Calu3 (cell line): ENCODE measurements at regions of chr10 and their contacts with region 1.

Region 1: GRCh38 chr10:72273410-72274212 is at the start of gene DDIT4:
- DNase-seq: peak; percentile 100
- H3K4me3 Mint-ChIP-seq: peak within 1 kb of the TSS; percentile 95
- H3K27ac Mint-ChIP-seq: peak within 1 kb of the TSS; percentile 99
- H3K4me1 Mint-ChIP-seq: peaks cover 62% of the 10 kb centered on the region
- H3K27me3 Mint-ChIP-seq: no peaks in the 10 kb centered on the region
- CTCF ChIP-seq: no peak
- total RNA-seq, gene DDIT4: 294 and 326 TPM in 2 replicates

Region 2: DNA sequence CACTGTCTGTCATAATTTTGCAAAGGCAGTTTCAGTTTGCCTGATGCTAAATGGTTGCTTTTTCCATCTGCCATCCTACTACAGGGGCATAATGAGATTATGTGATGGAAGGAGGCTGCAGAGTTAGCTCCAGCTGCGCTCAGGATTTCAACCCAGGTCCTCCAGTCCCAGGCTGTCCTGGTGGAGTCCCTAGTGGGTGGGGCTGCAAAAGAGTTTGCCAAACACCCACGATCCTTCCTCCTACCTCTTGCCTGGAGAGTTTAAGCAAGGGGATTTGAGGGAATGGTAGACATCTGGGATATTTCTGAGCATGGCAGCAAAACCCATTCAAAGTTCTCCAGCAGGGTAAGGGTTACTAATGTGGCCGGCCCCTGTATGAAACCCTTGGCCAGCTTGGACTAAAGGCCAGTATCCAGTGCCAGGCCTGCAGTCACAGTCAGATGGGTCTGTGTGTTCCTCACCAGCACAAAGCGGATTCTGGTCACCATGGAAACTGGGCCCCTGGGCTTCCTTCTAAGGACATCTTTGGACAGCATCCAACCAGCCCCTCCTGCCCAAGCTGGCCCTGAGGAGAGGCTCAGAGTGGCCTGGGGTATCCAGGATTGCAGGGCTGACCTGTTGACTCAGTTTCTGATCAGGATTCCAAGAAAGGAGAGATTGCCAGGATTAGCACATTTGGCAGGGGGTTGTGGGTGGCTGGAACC is 352.1 kb before region 1 on chr10:
- CTCF ChIA-PET with region 1: no interaction called
- intact Hi-C with region 1: no loop called
- DNase-seq: peak; percentile 33
- H3K4me3 Mint-ChIP-seq: no peak overlapping the region
- H3K27ac Mint-ChIP-seq: no peak overlapping the region
- H3K4me1 Mint-ChIP-seq: peaks cover 25% of the 10 kb centered on the region
- H3K27me3 Mint-ChIP-seq: no peaks in the 10 kb centered on the region
- CTCF ChIP-seq: no peak

Region 3: GRCh38 chr10:72260588-72261322 is 12.9 kb before region 1 on chr10:
- CTCF ChIA-PET with region 1: interaction called, 34 read pairs
- intact Hi-C with region 1: loop called (anchors 1 kb)
- DNase-seq: peak; percentile 100
- H3K4me3 Mint-ChIP-seq: peak overlapping the region; percentile 67
- H3K27ac Mint-ChIP-seq: peak overlapping the region; percentile 98
- H3K4me1 Mint-ChIP-seq: peaks cover 59% of the 10 kb centered on the region
- H3K27me3 Mint-ChIP-seq: no peaks in the 10 kb centered on the region
- CTCF ChIP-seq: no peak

Region 4: DNA sequence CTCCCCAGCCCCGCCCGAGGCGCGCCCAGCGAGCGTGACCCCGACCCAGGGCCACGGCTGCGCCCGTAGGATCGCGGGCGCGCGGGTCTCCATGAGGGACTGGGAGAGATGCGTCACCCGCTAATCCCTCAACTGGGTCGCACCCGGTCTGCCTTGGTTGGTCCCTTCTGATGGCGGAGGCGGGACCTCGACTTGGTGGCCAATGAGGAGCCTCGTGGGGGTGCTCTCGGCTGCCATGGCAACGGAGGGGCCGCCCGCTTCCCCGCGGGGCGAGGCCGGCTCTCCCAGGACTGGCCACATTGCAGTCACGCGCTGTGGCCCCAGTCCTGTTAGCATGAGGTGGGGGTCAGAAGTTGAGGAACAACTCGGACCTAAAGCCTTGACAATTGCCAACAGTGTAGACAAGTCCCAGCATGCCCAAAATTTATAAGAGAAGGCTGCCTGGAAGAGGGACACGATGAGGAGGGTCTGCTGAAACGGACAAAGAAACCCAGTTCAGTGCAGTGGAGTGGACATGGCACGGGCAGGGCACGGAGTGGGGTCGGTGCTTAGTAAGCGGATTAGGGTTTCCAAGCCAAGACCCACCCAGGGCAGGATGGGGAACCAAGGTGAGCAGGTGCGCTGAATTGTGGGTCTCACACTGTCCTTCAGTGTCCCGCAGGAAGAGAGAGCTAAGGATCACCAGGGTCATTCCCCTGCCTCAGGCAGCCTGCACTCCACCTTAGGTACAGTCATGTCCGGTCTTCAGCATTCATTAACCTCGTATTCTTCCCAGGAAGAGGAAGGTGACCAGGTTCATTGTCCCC is 24.6 kb after region 1 on chr10:
- CTCF ChIA-PET with region 1: interaction called, 12 read pairs
- intact Hi-C with region 1: no loop called
- DNase-seq: peak; percentile 99
- H3K4me3 Mint-ChIP-seq: peak overlapping the region; percentile 74
- H3K27ac Mint-ChIP-seq: peak overlapping the region; percentile 98
- H3K4me1 Mint-ChIP-seq: peaks cover 47% of the 10 kb centered on the region
- H3K27me3 Mint-ChIP-seq: no peaks in the 10 kb centered on the region
- CTCF ChIP-seq: no peak

Region 5: DNA sequence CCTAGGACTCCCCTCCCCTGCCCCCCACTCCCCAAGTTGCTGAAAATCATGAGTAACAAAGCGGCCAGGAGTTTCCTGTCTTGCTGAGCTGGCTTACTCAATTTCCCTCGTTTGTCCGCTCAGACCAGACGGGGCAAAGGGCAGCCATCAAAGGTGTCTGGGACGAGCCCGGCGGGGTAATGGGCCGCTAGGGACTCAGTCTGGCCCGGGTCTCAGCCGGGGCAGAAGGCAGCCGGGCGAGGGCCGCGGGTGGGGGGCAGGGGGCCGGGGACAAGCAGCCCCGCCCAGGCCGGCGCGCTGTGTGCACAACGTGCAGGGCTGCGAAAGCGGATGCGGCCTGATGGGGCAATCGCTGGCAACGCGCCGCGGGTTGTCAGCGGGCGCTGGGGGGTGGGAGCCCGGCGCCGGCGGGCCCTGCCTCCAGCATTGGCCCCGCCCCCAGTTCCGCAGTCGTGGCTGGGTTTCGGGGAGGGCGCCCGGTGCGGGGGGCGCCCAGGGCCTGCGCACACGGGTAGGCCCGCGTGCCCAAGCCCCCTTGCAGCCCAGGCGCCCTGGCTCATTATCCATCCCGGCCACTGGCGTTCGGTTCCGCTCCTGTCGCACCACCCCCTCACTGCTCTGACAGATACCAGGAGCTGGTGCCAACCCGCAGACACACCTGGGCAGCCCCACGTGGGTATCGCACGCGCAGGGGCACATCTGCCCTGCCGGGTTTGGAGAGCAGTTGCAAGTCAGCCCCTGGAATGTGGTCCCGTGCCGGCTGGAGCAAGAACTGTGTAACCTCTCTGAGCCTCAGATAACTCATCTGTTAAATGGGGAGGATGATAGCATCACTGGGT is 46.0 kb after region 1 on chr10:
- CTCF ChIA-PET with region 1: interaction called, 29 read pairs
- intact Hi-C with region 1: no loop called
- DNase-seq: peak; percentile 97
- H3K4me3 Mint-ChIP-seq: peak overlapping the region; percentile 46
- H3K27ac Mint-ChIP-seq: peak overlapping the region; percentile 98
- H3K4me1 Mint-ChIP-seq: peaks cover 89% of the 10 kb centered on the region
- H3K27me3 Mint-ChIP-seq: no peaks in the 10 kb centered on the region
- CTCF ChIP-seq: no peak

Region 6: GRCh38 chr10:72337020-72337629 is 63.5 kb after region 1 on chr10:
- CTCF ChIA-PET with region 1: interaction called, 24 read pairs
- intact Hi-C with region 1: no loop called
- DNase-seq: peak; percentile 92
- H3K4me3 Mint-ChIP-seq: no peak overlapping the region
- H3K27ac Mint-ChIP-seq: no peak overlapping the region
- H3K4me1 Mint-ChIP-seq: peaks cover 64% of the 10 kb centered on the region
- H3K27me3 Mint-ChIP-seq: no peaks in the 10 kb centered on the region
- CTCF ChIP-seq: peak; percentile 97

Region 7: DNA sequence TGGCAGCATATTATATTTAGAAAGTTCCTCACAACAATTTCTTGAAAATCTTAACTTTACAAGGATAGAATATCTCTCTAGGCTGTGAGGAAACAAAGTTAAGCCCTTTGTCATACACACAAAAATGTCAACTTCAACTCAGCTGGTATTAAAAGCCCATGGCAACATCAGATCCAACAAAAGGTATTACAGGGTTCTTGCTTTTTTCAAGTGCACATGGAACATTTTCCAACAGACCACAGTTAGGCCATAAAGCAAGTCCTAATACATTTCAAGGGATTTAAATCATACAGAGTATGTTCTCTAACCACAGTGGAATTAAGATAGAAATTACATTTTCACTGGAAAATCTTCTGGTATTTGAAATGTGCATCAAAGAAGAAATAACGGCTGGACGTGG is 548.0 kb after region 1 on chr10:
- CTCF ChIA-PET with region 1: no interaction called
- intact Hi-C with region 1: no loop called
- DNase-seq: no peak
- H3K4me3 Mint-ChIP-seq: no peak overlapping the region
- H3K27ac Mint-ChIP-seq: no peak overlapping the region
- H3K4me1 Mint-ChIP-seq: peaks cover 37% of the 10 kb centered on the region
- H3K27me3 Mint-ChIP-seq: no peaks in the 10 kb centered on the region
- CTCF ChIP-seq: no peak